Naive thymus-derived CD8-positive, alpha-beta T cell (primary cell): ENCODE measurements at regions of chr19 and their contacts with region 1.

Region 1: GRCh38 chr19:7069042-7069903 is at the start of gene ZNF557:
- DNase-seq: peak; percentile 98 to 100 (median 99)
- ATAC-seq: peak; percentile 93 to 95
- H3K4me3 Mint-ChIP-seq: peak within 1 kb of the TSS; percentile 87 to 98 (median 96)
- H3K27ac Mint-ChIP-seq: peak within 1 kb of the TSS; percentile 82 to 97 (median 96)
- H3K4me1 Mint-ChIP-seq: peaks cover 9 to 29% (median 23%) of the 10 kb centered on the region in 4 donors
- H3K27me3 Mint-ChIP-seq: no peaks in the 10 kb centered on the region
- polyA plus RNA-seq, gene ZNF557: 4.4 to 7.5 (median 7.4) TPM

Region 2: DNA sequence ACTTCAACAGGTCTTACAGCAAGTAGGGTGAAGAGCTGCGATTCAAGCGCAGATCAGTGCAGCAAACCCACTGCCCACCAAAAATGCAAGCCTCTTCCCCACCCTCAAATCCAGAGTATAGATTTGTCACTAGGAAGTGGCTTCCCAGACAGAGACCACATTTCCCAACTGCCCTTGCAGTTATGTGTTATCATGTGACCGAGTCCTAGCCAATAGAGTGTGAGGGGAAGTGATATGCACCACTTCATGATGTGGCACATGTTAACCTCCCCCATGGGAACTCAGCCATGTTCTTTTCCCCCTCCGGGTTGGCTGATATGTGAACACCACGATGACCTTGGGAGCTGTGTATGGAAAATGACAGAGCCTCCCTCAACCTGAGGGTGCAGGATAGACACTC is 98.8 kb before region 1 on chr19:
- POLR2A ChIA-PET with region 1: no interaction called
- DNase-seq: no peak
- ATAC-seq: no peak
- H3K4me3 Mint-ChIP-seq: no peak overlapping the region
- H3K27ac Mint-ChIP-seq: peak overlapping the region in 3 of 10 donors; percentile 27 to 63 (median 60)
- H3K4me1 Mint-ChIP-seq: peaks cover 0 to 9% (median 5%) of the 10 kb centered on the region in 4 donors
- H3K27me3 Mint-ChIP-seq: no peaks in the 10 kb centered on the region

Region 3: GRCh38 chr19:7083076-7083956 is 14.0 kb after region 1 on chr19:
- POLR2A ChIA-PET with region 1: interaction called, 12 read pairs
- DNase-seq: peak in 2 of 10 donors; percentile 13 to 30
- ATAC-seq: no peak
- H3K4me3 Mint-ChIP-seq: peak overlapping the region in 1 of 10 donors; percentile 25
- H3K27ac Mint-ChIP-seq: peak overlapping the region in 1 of 10 donors; percentile 20
- H3K4me1 Mint-ChIP-seq: peaks cover 0 to 6% (median 3%) of the 10 kb centered on the region in 4 donors
- H3K27me3 Mint-ChIP-seq: no peaks in the 10 kb centered on the region

Region 4: GRCh38 chr19:7098701-7099596 is 29.7 kb after region 1 on chr19:
- POLR2A ChIA-PET with region 1: interaction called, 50 read pairs
- DNase-seq: peak; percentile 82 to 95 (median 88)
- ATAC-seq: peak; percentile 92 to 93
- H3K4me3 Mint-ChIP-seq: peak overlapping the region; percentile 89 to 99 (median 94)
- H3K27ac Mint-ChIP-seq: peak overlapping the region; percentile 60 to 98 (median 95)
- H3K4me1 Mint-ChIP-seq: peaks cover 11 to 35% (median 32%) of the 10 kb centered on the region in 4 donors
- H3K27me3 Mint-ChIP-seq: no peaks in the 10 kb centered on the region

Region 5: GRCh38 chr19:7340959-7341837 is 271.9 kb after region 1 on chr19:
- POLR2A ChIA-PET with region 1: interaction called, 13 read pairs
- DNase-seq: peak; percentile 70 to 90 (median 82)
- ATAC-seq: peak in 1 of 2 donors; percentile 21
- H3K4me3 Mint-ChIP-seq: peak overlapping the region in 8 of 10 donors; percentile 9 to 53 (median 46)
- H3K27ac Mint-ChIP-seq: peak overlapping the region; percentile 34 to 91 (median 88)
- H3K4me1 Mint-ChIP-seq: peaks cover 35 to 86% (median 61%) of the 10 kb centered on the region in 4 donors
- H3K27me3 Mint-ChIP-seq: no peaks in the 10 kb centered on the region